ENCODE measurements at regions of chr3 and their contacts with region 1.

Region 1: GRCh38 chr3:38164966-38165680 is at the start of gene OXSR1:
- DNase-seq: peak; percentile 96
- ATAC-seq: peak; percentile 92
- H3K4me3 Mint-ChIP-seq: peak within 1 kb of the TSS; percentile 82
- H3K27ac Mint-ChIP-seq: peak within 1 kb of the TSS; percentile 99
- H3K4me1 Mint-ChIP-seq: peaks cover 41% of the 10 kb centered on the region
- H3K27me3 Mint-ChIP-seq: no peaks in the 10 kb centered on the region
- total RNA-seq, gene OXSR1: 54.0 to 55.0 TPM

Region 2: GRCh38 chr3:38136777-38137614 is 28.1 kb before region 1 on chr3 and contains the start of gene ACAA1:
- POLR2A ChIA-PET with region 1: interaction called, 171 read pairs
- DNase-seq: peak; percentile 93
- ATAC-seq: peak; percentile 86
- H3K4me3 Mint-ChIP-seq: peak within 1 kb of the TSS; percentile 86
- H3K27ac Mint-ChIP-seq: peak within 1 kb of the TSS; percentile 100
- H3K4me1 Mint-ChIP-seq: peaks cover 52% of the 10 kb centered on the region
- H3K27me3 Mint-ChIP-seq: no peaks in the 10 kb centered on the region
- total RNA-seq, gene ACAA1: 89.0 to 93.5 TPM

Region 3: DNA sequence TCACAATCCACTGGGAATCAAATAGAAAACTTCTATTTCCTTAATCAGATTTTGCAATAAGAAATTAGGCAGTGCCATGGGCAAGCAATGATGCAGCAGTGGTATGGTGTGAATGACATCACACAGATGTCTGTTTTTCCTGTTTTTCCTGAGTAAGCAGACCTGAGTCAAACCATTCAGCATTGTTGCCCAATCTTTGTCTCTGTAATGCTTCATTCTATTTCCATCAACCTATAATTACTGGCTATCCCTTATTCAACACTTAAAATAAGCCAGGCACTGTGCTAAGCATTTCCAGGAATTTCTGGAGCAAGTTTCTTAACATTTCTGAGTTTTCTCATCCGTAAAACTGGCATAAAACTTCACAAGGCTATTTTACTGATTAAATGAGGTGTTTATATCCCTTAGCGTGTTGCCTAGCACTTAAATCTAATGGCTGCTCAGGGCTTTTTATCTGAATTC is 11.1 kb before region 1 on chr3:
- POLR2A ChIA-PET with region 1: interaction called, 27 read pairs
- DNase-seq: no peak
- ATAC-seq: no peak
- H3K4me3 Mint-ChIP-seq: no peak overlapping the region
- H3K27ac Mint-ChIP-seq: no peak overlapping the region
- H3K4me1 Mint-ChIP-seq: peaks cover 30% of the 10 kb centered on the region
- H3K27me3 Mint-ChIP-seq: peaks cover 1% of the 10 kb centered on the region

Region 4: GRCh38 chr3:38190481-38190881 is 25.4 kb after region 1 on chr3:
- POLR2A ChIA-PET with region 1: interaction called, 18 read pairs
- DNase-seq: no peak
- ATAC-seq: peak; percentile 54
- H3K4me3 Mint-ChIP-seq: no peak overlapping the region
- H3K27ac Mint-ChIP-seq: peak overlapping the region; percentile 26
- H3K4me1 Mint-ChIP-seq: peaks cover 10% of the 10 kb centered on the region
- H3K27me3 Mint-ChIP-seq: no peaks in the 10 kb centered on the region